ENCODE measurements at regions of chr10 and their contacts with region 1.

Region 1: DNA sequence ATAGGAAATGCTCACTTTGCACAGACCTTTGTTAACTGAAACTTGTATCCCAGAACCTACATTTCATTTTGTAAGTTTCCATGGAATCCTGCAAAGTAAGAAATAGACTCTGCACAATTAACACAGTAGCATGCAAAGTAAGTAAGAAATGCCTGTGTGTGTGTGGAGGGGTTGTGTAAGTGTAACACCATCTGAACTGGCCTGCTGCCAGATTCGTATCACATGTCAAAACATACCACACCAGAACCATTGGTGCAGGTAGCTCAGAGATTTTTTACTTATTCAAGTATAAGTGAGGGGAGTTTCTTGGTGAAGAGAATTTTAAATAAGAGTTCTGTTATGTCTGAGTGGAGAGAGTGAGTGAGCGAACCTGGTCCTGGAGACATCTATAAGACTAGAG is 17.9 kb upstream of the DDX21 start:
- DNase-seq: no peak
- ATAC-seq: no peak
- H3K4me3 ChIP-seq: no peak overlapping the region
- H3K27ac ChIP-seq: no peak overlapping the region
- H3K4me1 ChIP-seq: no peaks in the 10 kb centered on the region
- H3K27me3 ChIP-seq: no peaks in the 10 kb centered on the region

Region 2: DNA sequence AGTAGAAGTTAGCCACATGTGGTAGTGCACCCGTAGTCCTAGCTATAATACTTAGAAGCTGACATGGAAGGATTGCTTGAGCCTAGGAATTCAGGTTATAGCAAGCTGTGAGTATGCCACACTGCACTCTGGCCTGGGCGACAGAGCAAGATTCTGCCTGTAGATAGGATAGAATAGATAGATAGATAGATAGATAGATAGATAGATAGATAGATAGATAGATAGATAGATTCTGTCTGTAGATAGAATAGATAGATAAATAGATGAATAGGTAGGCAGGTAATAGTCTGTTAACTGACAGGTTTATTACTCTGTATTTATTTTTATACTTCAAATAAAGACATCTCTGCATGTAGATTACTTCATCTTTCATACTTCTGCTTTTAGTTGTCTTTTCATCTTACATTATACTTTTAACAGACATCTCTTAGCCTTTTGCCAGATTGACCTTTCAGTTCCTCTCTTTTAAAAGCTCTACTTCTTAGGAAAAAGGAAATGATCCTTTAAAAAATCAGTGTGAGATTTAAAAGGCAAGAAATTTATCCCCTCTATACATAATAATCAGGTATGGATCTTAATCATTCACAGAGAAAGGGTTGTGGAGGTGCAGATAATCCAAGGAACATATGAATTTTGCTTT is 185.3 kb before region 1 on chr10:
- intact Hi-C with region 1: loop called in 1 of 4 experiments (anchors 10 kb)
- DNase-seq: no peak
- ATAC-seq: no peak
- H3K4me3 ChIP-seq: no peak overlapping the region
- H3K27ac ChIP-seq: no peak overlapping the region
- H3K4me1 ChIP-seq: no peaks in the 10 kb centered on the region
- H3K27me3 ChIP-seq: no peaks in the 10 kb centered on the region

Region 3: DNA sequence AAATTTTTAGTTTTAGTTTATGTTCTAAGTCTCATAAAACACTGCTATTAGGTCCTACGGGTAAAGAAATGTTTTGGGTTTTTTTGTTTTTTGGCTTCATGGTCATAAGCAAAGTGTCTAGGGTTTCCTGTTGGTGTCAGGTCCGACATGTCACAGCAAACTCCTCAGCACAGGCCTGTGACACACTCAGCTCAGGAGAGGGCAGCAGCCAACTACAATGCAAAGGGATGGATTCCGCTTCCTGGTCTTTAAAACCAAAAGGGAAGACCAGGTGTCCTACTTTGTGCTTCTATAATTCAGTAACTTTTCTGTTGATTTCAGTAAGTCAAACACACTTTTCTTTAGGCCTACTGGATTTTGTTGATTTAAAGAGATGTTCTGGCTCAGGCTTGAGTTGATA is 1030.7 kb after region 1 on chr10:
- intact Hi-C with region 1: no loop called
- DNase-seq: no peak
- ATAC-seq: peak in 1 of 2 donors; percentile 58
- H3K4me3 ChIP-seq: no peak overlapping the region
- H3K27ac ChIP-seq: no peak overlapping the region
- H3K4me1 ChIP-seq: no peaks in the 10 kb centered on the region
- H3K27me3 ChIP-seq: no peaks in the 10 kb centered on the region

Measured in right cardiac atrium (tissue), 5 donors.